ENCODE measurements at regions of chr7 and their contacts with region 1.

Region 1: GRCh38 chr7:34321000-34321581 is 336.9 kb upstream of the NPSR1 start:
- DNase-seq: no peak
- H3K4me3 ChIP-seq: no peak overlapping the region
- CTCF ChIP-seq: peak; percentile 90

Region 2: GRCh38 chr7:33789871-33790630 is 531.0 kb before region 1 on chr7:
- CTCF ChIA-PET with region 1: no interaction called
- POLR2A ChIA-PET with region 1: no interaction called
- DNase-seq: no peak
- H3K4me3 ChIP-seq: no peak overlapping the region
- CTCF ChIP-seq: no peak

Region 3: DNA sequence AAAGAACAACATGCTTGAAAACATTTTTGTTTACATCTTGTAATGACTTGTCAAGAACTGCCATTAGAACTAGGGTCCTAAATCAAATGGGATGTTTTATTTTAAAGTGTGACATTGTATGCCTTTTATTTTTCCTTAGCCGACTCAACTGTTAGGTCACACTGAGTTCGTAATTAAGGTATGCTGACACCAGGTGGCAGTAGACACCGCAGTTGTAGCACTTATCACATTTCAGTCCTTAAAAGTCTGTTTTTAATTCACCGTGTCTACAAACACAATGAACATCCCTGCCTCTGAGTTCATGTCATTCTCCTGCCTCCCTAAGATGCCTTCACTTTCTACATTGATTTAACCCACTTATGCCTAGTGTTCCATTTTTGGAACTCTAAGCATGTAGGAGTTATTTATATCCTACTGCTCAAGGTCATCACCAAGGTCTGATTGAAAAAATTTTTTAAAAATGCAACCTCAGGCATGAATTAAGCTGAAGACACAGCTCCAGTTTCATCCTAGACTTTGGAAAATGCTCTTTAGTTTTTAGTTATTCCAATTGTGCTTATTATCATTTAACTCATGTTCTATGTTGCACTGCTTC is 229.7 kb before region 1 on chr7:
- CTCF ChIA-PET with region 1: interaction called, 11 read pairs
- POLR2A ChIA-PET with region 1: no interaction called
- DNase-seq: no peak
- H3K4me3 ChIP-seq: no peak overlapping the region
- CTCF ChIP-seq: peak; percentile 50

Region 4: DNA sequence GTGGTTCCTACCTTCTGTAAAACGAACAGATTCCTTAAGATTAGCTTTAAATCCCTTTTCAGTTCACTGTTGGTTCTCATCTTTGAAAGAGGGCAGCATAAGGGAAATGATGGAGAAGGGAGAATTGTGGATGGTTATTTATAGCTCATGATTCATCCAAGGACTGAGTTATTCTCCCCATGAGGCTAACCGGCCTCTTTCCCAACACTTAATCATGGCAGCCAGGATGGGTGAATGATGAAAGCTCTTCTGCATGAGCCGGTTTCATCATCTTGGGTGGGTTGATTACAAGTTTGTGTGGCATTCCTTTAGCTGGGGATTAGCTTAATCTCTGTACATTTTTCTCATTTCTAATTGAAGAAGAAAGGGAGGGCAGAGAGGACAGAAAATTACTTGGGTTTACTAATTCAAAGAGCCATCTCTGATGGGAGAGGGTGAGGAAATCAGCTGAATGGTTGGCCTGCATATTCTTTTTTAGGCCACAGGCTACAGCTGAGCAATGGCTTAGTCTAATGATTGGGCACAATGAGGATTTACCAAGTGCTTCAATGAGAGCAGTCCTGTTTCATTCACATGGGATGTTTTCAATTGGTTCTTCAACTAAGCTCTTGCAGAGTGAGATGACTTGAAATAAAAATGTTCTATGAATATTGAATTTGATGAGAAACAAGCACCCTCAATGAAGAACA is 165.7 kb before region 1 on chr7:
- CTCF ChIA-PET with region 1: interaction called, 11 read pairs
- POLR2A ChIA-PET with region 1: no interaction called
- DNase-seq: peak; percentile 98
- H3K4me3 ChIP-seq: no peak overlapping the region
- CTCF ChIP-seq: no peak

Region 5: GRCh38 chr7:34275624-34276023 is 45.5 kb before region 1 on chr7:
- CTCF ChIA-PET with region 1: no interaction called
- POLR2A ChIA-PET with region 1: no interaction called
- DNase-seq: no peak
- H3K4me3 ChIP-seq: no peak overlapping the region
- CTCF ChIP-seq: no peak

Region 6: GRCh38 chr7:34341316-34341715 is 20.2 kb after region 1 on chr7:
- CTCF ChIA-PET with region 1: interaction called, 20 read pairs
- POLR2A ChIA-PET with region 1: no interaction called
- DNase-seq: no peak
- H3K4me3 ChIP-seq: no peak overlapping the region
- CTCF ChIP-seq: no peak

Region 7: GRCh38 chr7:34396437-34397065 is 75.5 kb after region 1 on chr7:
- CTCF ChIA-PET with region 1: interaction called, 15 read pairs
- POLR2A ChIA-PET with region 1: no interaction called
- DNase-seq: no peak
- H3K4me3 ChIP-seq: no peak overlapping the region
- CTCF ChIP-seq: no peak

Region 8: DNA sequence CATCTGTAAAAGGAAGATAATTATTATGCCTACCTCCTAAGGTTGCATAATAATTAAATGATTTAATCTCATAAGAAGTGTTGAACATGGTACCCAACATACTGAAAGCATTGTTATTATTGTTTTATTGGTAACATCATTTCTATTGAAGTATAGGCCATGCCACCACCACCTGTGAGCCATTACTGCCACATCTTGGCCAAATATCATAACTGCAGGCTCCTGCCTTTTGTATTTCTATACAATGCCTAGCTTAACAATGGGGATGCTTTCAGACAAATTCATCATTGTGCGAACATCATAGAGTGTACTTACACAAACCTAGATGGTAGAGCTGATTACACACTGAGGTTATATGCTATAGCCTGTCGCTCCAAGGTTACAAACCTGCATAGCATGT is 275.8 kb after region 1 on chr7:
- CTCF ChIA-PET with region 1: interaction called, 33 read pairs
- POLR2A ChIA-PET with region 1: no interaction called
- DNase-seq: no peak
- H3K4me3 ChIP-seq: no peak overlapping the region
- CTCF ChIP-seq: peak; percentile 5

Measured in AG04449 (cell line).